PC-3 (cell line): ENCODE measurements at regions of chr20 and their contacts with region 1.

Region 1: GRCh38 chr20:19880256-19881079 is 122.4 kb downstream of the RIN2 start:
- DNase-seq: peak; percentile 95
- ATAC-seq: peak; percentile 86
- H3K4me3 ChIP-seq: peak overlapping the region; percentile 29; the same call in 1 of the 2 replicates
- H3K27ac ChIP-seq: peak overlapping the region; percentile 96
- H3K4me1 ChIP-seq: peaks cover 50% of the 10 kb centered on the region
- H3K27me3 ChIP-seq: no peaks in the 10 kb centered on the region
- CTCF ChIP-seq: no peak

Region 2: DNA sequence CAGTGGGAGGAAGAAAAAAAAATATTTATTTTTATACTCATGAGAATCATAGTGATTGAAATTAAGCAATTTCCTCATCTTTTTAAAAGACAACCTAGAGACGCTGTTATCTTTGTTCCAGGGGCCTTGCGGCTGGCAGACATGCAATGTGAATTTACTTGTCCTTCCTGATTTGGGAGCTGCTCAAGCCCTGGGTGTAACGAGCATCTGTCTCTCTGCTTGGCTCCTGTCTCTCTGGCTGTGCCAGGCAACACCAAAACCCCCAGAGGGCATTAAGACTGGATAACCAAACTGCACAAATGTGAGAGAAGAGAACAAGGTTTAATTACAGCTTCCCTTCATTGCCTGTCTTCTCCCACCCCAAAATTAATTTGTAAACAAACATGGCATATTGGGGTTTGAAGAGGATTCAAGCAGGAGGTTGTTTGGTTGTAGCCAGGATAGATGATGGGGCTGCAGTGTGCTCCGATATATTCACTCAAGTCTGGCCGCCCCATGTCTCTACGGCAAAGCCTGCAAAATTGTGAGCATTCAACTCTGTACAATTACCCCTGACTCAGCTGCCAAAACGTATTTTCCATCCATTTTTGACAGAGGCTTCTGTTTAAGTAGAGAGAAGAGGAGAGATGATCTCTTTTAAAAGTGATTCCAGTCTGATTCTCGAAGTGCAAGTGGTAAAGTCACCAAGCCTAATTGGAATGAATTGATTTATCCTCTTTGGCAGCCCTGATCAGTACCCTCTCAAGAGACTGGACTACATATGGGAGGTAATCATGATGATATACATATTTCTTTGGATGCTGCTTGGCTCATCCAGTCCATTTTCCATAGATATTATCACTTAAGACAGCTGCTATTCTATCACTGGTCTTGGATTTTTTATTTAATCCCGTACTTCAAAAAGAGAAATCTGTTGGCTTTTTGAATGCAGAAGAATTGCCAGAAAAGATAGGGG is 497.8 kb before region 1 on chr20:
- CTCF ChIA-PET with region 1: no interaction called
- POLR2A ChIA-PET with region 1: no interaction called
- intact Hi-C with region 1: no loop called
- DNase-seq: no peak
- ATAC-seq: no peak
- H3K4me3 ChIP-seq: no peak overlapping the region
- H3K27ac ChIP-seq: no peak overlapping the region
- H3K4me1 ChIP-seq: no peaks in the 10 kb centered on the region
- H3K27me3 ChIP-seq: peaks cover 39% of the 10 kb centered on the region
- CTCF ChIP-seq: no peak

Region 3: DNA sequence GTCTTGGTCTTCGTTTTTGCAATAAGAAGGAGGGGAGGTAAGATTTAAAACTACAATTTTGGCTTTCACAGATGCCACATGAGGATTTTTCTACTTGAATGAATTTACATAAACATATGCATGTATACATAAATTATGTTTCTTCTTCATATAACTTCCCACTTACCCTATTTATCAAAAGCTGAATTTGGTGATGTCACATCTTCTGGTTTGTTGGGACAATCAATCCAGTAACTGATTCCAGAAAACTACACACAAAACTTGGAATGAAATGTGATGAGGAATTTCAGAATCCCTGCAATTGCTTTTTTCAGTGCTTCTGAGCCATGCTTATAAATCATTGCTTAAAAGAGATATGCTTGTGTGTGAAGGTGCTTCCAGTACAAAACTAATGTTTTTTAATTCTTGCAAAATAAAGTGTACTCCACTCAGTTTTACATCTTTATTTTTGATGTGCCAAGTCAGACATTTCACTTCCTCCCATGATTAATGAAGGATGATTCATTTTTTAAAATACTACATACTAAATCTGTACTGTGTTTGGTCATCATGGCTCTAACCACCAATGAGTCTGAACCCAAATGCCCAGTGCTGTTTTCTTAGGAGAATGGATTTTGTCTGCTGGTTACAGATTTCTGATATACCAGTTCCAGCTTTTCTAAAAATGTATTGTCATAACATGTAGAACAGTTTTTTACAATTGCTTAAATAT is 154.5 kb before region 1 on chr20:
- CTCF ChIA-PET with region 1: no interaction called
- POLR2A ChIA-PET with region 1: no interaction called
- intact Hi-C with region 1: no loop called
- DNase-seq: peak; percentile 59
- ATAC-seq: peak; percentile 95
- H3K4me3 ChIP-seq: no peak overlapping the region
- H3K27ac ChIP-seq: no peak overlapping the region
- H3K4me1 ChIP-seq: peaks cover 11% of the 10 kb centered on the region
- H3K27me3 ChIP-seq: no peaks in the 10 kb centered on the region
- CTCF ChIP-seq: no peak

Region 4: DNA sequence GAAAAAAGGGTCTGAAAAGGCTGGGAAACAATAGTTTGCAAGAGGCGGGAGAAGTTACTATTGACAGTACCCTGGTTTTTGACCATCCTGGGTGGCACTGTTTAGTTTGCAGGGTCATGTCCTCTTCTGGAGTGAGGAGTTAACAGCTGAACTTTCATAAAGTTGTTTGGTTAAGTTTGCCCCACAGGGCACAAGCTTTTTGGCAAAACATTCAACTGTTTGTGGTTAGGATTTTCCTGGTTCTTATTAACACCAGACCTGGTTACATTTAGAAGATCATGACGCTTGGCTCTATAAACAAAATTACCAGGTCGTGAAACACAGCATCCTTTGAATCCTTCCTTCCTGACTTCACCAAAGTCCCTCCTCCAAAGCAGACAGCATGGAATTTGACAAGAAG is 16.3 kb before region 1 on chr20:
- CTCF ChIA-PET with region 1: no interaction called
- POLR2A ChIA-PET with region 1: no interaction called
- intact Hi-C with region 1: loop called (anchors 2 kb)
- DNase-seq: peak; percentile 64
- ATAC-seq: peak; percentile 82
- H3K4me3 ChIP-seq: no peak overlapping the region
- H3K27ac ChIP-seq: peak overlapping the region; percentile 52
- H3K4me1 ChIP-seq: peaks cover 28% of the 10 kb centered on the region
- H3K27me3 ChIP-seq: no peaks in the 10 kb centered on the region
- CTCF ChIP-seq: no peak